ENCODE measurements at regions of chr16 and their contacts with region 1.

Region 1: DNA sequence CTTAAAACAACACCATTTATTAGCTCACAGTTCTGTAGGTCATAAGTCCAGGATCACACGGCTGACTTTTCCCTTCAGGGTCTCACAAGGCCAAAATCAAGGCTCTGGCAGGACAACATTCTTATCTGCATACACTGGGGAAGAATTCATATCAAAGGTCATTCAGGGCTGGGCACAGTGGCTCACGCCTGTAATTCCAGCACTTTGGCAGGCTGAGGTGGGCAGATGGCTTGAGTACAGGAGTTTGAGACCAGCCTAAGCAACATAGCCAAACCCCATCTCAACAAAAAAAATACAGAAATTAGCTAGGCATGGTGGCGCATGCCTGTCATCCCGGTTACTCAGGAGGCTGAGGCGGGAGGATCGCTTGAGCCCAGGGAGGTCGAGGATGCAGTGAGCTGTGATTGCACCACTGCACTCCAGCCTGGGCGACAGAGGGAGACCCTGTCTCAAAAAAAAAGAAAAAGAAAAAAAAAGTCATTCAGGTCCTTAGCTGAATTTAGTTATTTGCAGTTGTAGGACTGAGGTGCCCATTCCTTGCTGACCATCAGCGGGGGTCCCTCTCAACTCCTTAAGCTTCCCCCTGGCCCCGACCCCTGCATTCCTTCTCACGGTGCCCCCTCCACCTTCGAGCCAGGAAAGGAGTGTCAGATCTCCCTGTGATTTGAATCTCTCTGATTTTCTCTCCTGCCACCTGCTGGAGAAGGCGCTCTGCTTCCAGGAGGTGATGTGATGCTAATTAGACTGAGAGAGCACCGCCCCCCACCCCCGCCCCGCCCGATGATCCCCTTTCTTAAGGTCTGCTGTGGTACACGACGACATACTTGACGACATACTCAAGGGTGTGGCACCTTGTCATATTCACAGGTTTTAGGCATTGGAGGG is 91.8 kb upstream of the CLEC18A start:
- DNase-seq: no peak
- H3K4me3 ChIP-seq: no peak overlapping the region
- CTCF ChIP-seq: peak; percentile 51

Region 2: GRCh38 chr16:69787883-69788282 is 71.5 kb before region 1 on chr16:
- in situ Hi-C with region 1: loop called (anchors 5 kb)
- DNase-seq: no peak
- H3K4me3 ChIP-seq: no peak overlapping the region
- CTCF ChIP-seq: no peak

Measured in astrocyte of the cerebellum (primary cell).